Caco-2 (cell line): ENCODE measurements at regions of chr7 and their contacts with region 1.

Region 1: DNA sequence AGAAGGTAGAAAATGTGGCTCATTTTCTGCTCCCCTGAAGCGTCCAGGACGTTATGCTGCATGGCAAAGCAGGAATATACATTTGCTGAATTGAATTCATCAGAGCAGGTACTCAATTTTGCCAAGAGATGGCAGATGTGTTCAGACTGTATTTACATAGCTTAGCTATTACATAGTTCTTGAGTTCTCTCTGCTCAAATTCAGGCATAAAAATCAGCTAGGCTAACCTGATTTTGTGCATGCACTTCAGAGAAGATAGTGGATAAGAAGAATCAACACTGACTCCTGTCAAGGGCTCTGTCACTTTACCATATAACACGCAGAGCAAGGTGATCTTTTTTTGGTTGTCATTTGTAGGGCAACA is 209.2 kb upstream of the FAM3C start:
- DNase-seq: peak in 1 of 2 experiments; percentile 7
- H3K4me3 ChIP-seq: no peak overlapping the region
- H3K4me3 Mint-ChIP-seq: no peak overlapping the region
- H3K27ac Mint-ChIP-seq: no peak overlapping the region
- H3K4me1 ChIP-seq: no peaks in the 10 kb centered on the region
- H3K4me1 Mint-ChIP-seq: peaks cover 6% of the 10 kb centered on the region
- H3K27me3 ChIP-seq: no peaks in the 10 kb centered on the region
- H3K27me3 Mint-ChIP-seq: peaks cover 16% of the 10 kb centered on the region
- CTCF ChIP-seq: peak in 1 of 2 experiments; percentile 18

Region 2: DNA sequence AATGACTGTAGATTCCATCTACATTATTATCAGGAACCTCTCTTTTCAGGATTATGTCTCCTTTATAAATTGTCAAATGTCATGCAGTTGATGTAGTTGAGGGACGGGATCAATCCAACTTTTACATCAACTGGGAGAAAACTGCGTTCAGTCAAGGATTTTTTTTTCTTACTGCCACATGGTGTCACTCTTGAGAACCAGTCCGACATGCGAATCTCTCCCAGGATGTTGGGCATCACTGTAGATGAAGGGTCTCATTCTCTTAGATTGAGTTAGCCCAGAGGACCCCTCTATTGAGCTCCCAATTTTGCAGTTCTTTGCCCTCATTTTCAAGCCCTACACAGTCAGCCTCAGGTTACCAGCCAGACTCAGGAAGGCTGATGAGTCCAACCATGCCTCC is 147.4 kb after region 1 on chr7:
- CTCF ChIA-PET with region 1: no interaction called
- POLR2A ChIA-PET with region 1: no interaction called
- intact Hi-C with region 1: loop called (anchors 10 kb)
- DNase-seq: peak in 1 of 2 experiments; percentile 5
- H3K4me3 ChIP-seq: no peak overlapping the region
- H3K4me3 Mint-ChIP-seq: no peak overlapping the region
- H3K27ac Mint-ChIP-seq: no peak overlapping the region
- H3K4me1 ChIP-seq: no peaks in the 10 kb centered on the region
- H3K4me1 Mint-ChIP-seq: no peaks in the 10 kb centered on the region
- H3K27me3 ChIP-seq: no peaks in the 10 kb centered on the region
- H3K27me3 Mint-ChIP-seq: peaks cover 9% of the 10 kb centered on the region
- CTCF ChIP-seq: peak; percentile 29 to 40

Region 3: GRCh38 chr7:121847041-121847440 is 241.7 kb after region 1 on chr7:
- CTCF ChIA-PET with region 1: no interaction called
- POLR2A ChIA-PET with region 1: no interaction called
- intact Hi-C with region 1: no loop called
- DNase-seq: no peak
- H3K4me3 ChIP-seq: no peak overlapping the region
- H3K4me3 Mint-ChIP-seq: no peak overlapping the region
- H3K27ac Mint-ChIP-seq: no peak overlapping the region
- H3K4me1 ChIP-seq: no peaks in the 10 kb centered on the region
- H3K4me1 Mint-ChIP-seq: no peaks in the 10 kb centered on the region
- H3K27me3 ChIP-seq: no peaks in the 10 kb centered on the region
- H3K27me3 Mint-ChIP-seq: no peaks in the 10 kb centered on the region
- CTCF ChIP-seq: no peak